ENCODE measurements at regions of chr2 and their contacts with region 1.

Region 1: GRCh38 chr2:121722479-121722878 is 14.2 kb downstream of the NIFK start:
- DNase-seq: no peak
- ATAC-seq: no peak
- H3K4me3 ChIP-seq: no peak overlapping the region
- H3K4me3 Mint-ChIP-seq: no peak overlapping the region
- H3K27ac ChIP-seq: no peak overlapping the region
- H3K27ac Mint-ChIP-seq: peak overlapping the region in 1 of 2 donors; percentile 16
- H3K4me1 ChIP-seq: peaks cover 0 to 9% of the 10 kb centered on the region in 2 experiments
- H3K4me1 Mint-ChIP-seq: peaks cover 0 to 9% (median 4%) of the 10 kb centered on the region in 3 donors
- H3K27me3 ChIP-seq: no peaks in the 10 kb centered on the region
- H3K27me3 Mint-ChIP-seq: no peaks in the 10 kb centered on the region

Region 2: DNA sequence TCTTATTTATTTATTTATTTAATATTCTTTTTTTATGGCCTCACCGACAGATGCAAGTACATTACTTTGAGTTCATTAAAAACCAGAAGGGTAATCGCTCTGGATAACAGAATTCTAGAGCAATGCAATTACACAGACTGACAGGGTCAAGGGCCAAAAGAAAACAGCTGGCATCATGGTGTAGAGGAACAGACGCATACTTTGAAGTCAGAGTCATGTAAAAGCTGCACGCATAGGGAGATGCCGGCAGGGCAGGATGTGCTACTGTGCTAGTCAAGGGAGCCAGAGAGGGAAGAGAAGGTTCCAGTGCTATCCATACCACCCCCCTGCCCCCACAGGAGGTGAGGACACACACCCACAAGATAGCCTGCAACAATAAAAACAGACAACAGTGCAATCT is 322.3 kb before region 1 on chr2:
- CTCF ChIA-PET with region 1: interaction called, 3 to 14 read pairs
- POLR2A ChIA-PET with region 1: no interaction called
- DNase-seq: no peak
- ATAC-seq: no peak
- H3K4me3 ChIP-seq: no peak overlapping the region
- H3K4me3 Mint-ChIP-seq: no peak overlapping the region
- H3K27ac ChIP-seq: no peak overlapping the region
- H3K27ac Mint-ChIP-seq: no peak overlapping the region
- H3K4me1 ChIP-seq: no peaks in the 10 kb centered on the region
- H3K4me1 Mint-ChIP-seq: peaks cover 0 to 2% (median 0%) of the 10 kb centered on the region in 3 donors
- H3K27me3 ChIP-seq: no peaks in the 10 kb centered on the region
- H3K27me3 Mint-ChIP-seq: no peaks in the 10 kb centered on the region

Region 3: GRCh38 chr2:121501031-121501430 is 221.4 kb before region 1 on chr2:
- CTCF ChIA-PET with region 1: no interaction called
- POLR2A ChIA-PET with region 1: interaction called in 1 of 2 experiments, 10 read pairs
- DNase-seq: no peak
- ATAC-seq: no peak
- H3K4me3 ChIP-seq: no peak overlapping the region
- H3K4me3 Mint-ChIP-seq: no peak overlapping the region
- H3K27ac ChIP-seq: no peak overlapping the region
- H3K27ac Mint-ChIP-seq: no peak overlapping the region
- H3K4me1 ChIP-seq: no peaks in the 10 kb centered on the region
- H3K4me1 Mint-ChIP-seq: peaks cover 9 to 28% (median 17%) of the 10 kb centered on the region in 3 donors
- H3K27me3 ChIP-seq: no peaks in the 10 kb centered on the region
- H3K27me3 Mint-ChIP-seq: no peaks in the 10 kb centered on the region

Region 4: DNA sequence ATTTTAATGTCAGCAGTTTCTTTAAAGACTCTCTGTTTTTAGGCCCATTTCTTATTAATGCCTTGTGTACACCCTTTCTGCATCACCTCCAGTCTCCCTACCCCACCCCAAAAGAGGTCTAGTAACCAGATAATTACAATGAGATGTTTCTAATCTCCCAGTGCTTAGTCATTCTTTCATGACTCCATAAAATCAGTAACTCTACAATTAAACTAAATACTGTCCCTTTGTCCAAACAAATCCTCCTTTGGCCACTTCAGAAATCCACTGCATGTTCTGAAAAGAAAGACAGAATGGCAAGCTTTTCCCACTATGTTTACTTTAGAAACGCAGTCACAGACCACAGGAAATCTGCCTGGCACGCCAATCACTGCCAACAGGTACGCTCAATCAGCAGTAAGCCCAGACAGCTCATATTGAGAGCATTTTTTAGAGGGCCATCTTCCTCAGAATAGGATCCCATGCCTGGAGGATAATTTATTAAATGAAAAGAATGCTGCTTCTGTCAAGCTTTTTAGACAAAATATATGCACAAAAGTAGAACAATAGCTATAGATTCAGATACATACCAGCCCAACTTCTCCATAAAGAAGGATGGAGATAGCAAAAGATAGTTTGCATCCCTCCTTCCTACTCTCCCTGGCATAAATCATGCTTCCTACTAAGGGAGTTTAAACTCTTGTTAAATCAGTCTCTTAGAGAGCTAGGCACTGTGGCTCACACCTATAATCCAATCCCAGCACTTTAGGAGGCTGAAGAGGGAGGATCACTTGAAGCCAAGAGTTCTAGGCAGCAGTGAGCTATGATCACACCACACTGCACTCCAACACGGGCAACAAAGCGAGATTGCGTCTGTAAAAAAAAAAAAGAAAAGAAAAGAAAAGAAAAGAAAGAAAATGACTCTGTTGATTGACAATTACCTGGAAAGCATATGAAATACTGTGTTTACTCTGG is 87.8 kb before region 1 on chr2:
- CTCF ChIA-PET with region 1: no interaction called
- POLR2A ChIA-PET with region 1: interaction called, 3 to 10 read pairs
- DNase-seq: peak in 1 of 35 experiments; percentile 18
- ATAC-seq: peak in 3 of 4 experiments; percentile 40 to 71 (median 57)
- H3K4me3 ChIP-seq: no peak overlapping the region
- H3K4me3 Mint-ChIP-seq: peak overlapping the region in 2 of 3 donors; percentile 20 to 38
- H3K27ac ChIP-seq: no peak overlapping the region
- H3K27ac Mint-ChIP-seq: peak overlapping the region; percentile 73 to 78
- H3K4me1 ChIP-seq: peaks cover 6% of the 10 kb centered on the region in 2 experiments
- H3K4me1 Mint-ChIP-seq: peaks cover 36 to 43% (median 38%) of the 10 kb centered on the region in 3 donors
- H3K27me3 ChIP-seq: no peaks in the 10 kb centered on the region
- H3K27me3 Mint-ChIP-seq: no peaks in the 10 kb centered on the region

Region 5: GRCh38 chr2:121748202-121748601 is 25.7 kb after region 1 on chr2:
- CTCF ChIA-PET with region 1: no interaction called
- POLR2A ChIA-PET with region 1: no interaction called
- DNase-seq: no peak
- ATAC-seq: no peak
- H3K4me3 ChIP-seq: no peak overlapping the region
- H3K4me3 Mint-ChIP-seq: no peak overlapping the region
- H3K27ac ChIP-seq: no peak overlapping the region
- H3K27ac Mint-ChIP-seq: no peak overlapping the region
- H3K4me1 ChIP-seq: peaks cover 0 to 2% of the 10 kb centered on the region in 2 experiments
- H3K4me1 Mint-ChIP-seq: no peaks in the 10 kb centered on the region
- H3K27me3 ChIP-seq: peaks cover 0 to 5% of the 10 kb centered on the region in 2 experiments
- H3K27me3 Mint-ChIP-seq: peaks cover 0 to 3% of the 10 kb centered on the region in 2 donors